CD4-positive, alpha-beta T cell (primary cell): ENCODE measurements at regions of chr2 and their contacts with region 1.

Region 1: DNA sequence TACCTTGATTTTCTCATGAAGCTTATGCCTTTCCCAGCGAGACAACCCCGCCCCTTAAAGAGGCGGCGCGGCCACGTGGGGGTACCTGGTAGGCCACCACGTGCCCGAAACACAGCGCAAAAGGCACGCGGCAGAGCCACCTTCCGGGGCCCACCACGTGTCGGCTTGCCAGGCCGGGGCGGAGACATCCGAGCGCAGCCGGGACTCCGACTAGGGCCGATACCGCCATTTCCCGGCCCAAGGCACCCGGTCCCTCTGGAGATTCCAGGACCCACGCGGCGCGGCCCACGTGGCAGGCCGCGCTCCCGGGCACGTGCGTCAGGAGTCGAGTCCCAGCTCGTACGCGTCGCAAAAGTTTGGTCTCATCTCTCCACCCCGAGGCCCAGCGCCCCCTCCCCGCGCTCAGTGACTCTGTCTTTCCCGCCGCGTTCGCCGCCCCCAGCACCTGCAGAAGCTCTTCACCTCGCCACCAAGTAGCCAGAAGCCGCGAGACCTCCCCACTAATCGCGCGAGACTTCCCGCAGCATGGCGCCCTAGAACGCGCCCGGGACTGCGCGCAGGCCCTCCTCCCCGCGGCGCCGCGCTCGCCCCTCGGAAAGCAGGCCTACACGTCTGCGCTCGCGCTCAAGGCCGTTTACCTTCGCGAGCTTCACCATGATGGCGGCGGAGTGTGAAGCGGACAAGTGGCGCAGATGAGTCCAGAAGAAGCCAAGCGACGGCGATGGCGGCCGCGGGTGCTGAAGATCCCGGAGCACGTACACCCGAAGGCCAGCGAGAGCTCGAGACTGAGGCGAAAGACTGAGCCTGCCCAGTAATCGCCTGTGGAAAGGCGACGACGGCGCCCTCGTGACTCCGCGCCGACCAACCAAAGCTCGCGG is at the start of gene NCL:
- DNase-seq: peak; percentile 75 to 98 (median 81)
- ATAC-seq: peak; percentile 67
- H3K4me3 ChIP-seq: peak within 1 kb of the TSS; percentile 91
- H3K4me3 Mint-ChIP-seq: peak within 1 kb of the TSS; percentile 93
- H3K27ac ChIP-seq: peak within 1 kb of the TSS; percentile 96 to 97
- H3K27ac Mint-ChIP-seq: peak within 1 kb of the TSS; percentile 99
- H3K4me1 ChIP-seq: peaks cover 57% of the 10 kb centered on the region
- H3K4me1 Mint-ChIP-seq: peaks cover 57% of the 10 kb centered on the region
- H3K27me3 ChIP-seq: no peaks in the 10 kb centered on the region
- H3K27me3 Mint-ChIP-seq: no peaks in the 10 kb centered on the region
- CTCF ChIP-seq: no peak
- total RNA-seq, gene NCL: 387 to 395 TPM

Region 2: GRCh38 chr2:231056453-231057424 is 407.2 kb before region 1 on chr2 and contains the start of gene PSMD1:
- CTCF ChIA-PET with region 1: no interaction called
- POLR2A ChIA-PET with region 1: interaction called, 13 read pairs
- intact Hi-C with region 1: loop called in 1 of 2 experiments (anchors 1 kb)
- DNase-seq: peak; percentile 88 to 97 (median 93)
- ATAC-seq: peak; percentile 81
- H3K4me3 ChIP-seq: peak within 1 kb of the TSS; percentile 95
- H3K4me3 Mint-ChIP-seq: peak within 1 kb of the TSS; percentile 100
- H3K27ac ChIP-seq: peak within 1 kb of the TSS; percentile 80 to 83
- H3K27ac Mint-ChIP-seq: peak within 1 kb of the TSS; percentile 98
- H3K4me1 ChIP-seq: peaks cover 34% of the 10 kb centered on the region
- H3K4me1 Mint-ChIP-seq: peaks cover 60% of the 10 kb centered on the region
- H3K27me3 ChIP-seq: no peaks in the 10 kb centered on the region
- H3K27me3 Mint-ChIP-seq: peaks cover 12% of the 10 kb centered on the region
- CTCF ChIP-seq: peak; percentile 94
- total RNA-seq, gene PSMD1: 27.9 to 31.3 TPM

Region 3: GRCh38 chr2:231452799-231453508 is 11.0 kb before region 1 on chr2:
- CTCF ChIA-PET with region 1: interaction called, 13 read pairs
- POLR2A ChIA-PET with region 1: interaction called, 117 read pairs
- intact Hi-C with region 1: no loop called
- DNase-seq: peak in 1 of 14 experiments; percentile 24
- ATAC-seq: no peak
- H3K4me3 ChIP-seq: no peak overlapping the region
- H3K4me3 Mint-ChIP-seq: peak overlapping the region; percentile 20
- H3K27ac ChIP-seq: no peak overlapping the region
- H3K27ac Mint-ChIP-seq: peak overlapping the region; percentile 82
- H3K4me1 ChIP-seq: peaks cover 8% of the 10 kb centered on the region
- H3K4me1 Mint-ChIP-seq: peaks cover 22% of the 10 kb centered on the region
- H3K27me3 ChIP-seq: no peaks in the 10 kb centered on the region
- H3K27me3 Mint-ChIP-seq: no peaks in the 10 kb centered on the region
- CTCF ChIP-seq: no peak

Region 4: GRCh38 chr2:231514103-231514950 is 50.4 kb after region 1 on chr2:
- CTCF ChIA-PET with region 1: no interaction called
- POLR2A ChIA-PET with region 1: interaction called, 67 read pairs
- intact Hi-C with region 1: loop called (anchors 1 kb)
- DNase-seq: peak; percentile 96 to 99 (median 98)
- ATAC-seq: peak; percentile 96
- H3K4me3 ChIP-seq: peak overlapping the region; percentile 78
- H3K4me3 Mint-ChIP-seq: peak overlapping the region; percentile 91
- H3K27ac ChIP-seq: peak overlapping the region; percentile 87 to 95
- H3K27ac Mint-ChIP-seq: peak overlapping the region; percentile 94
- H3K4me1 ChIP-seq: peaks cover 12% of the 10 kb centered on the region
- H3K4me1 Mint-ChIP-seq: peaks cover 24% of the 10 kb centered on the region
- H3K27me3 ChIP-seq: no peaks in the 10 kb centered on the region
- H3K27me3 Mint-ChIP-seq: no peaks in the 10 kb centered on the region
- CTCF ChIP-seq: no peak

Region 5: GRCh38 chr2:231662028-231662810 is 198.3 kb after region 1 on chr2:
- CTCF ChIA-PET with region 1: no interaction called
- POLR2A ChIA-PET with region 1: interaction called, 20 read pairs
- intact Hi-C with region 1: loop called in 1 of 2 experiments (anchors 1 kb)
- DNase-seq: peak; percentile 92 to 99 (median 97)
- ATAC-seq: peak; percentile 89
- H3K4me3 ChIP-seq: peak overlapping the region; percentile 57
- H3K4me3 Mint-ChIP-seq: peak overlapping the region; percentile 73
- H3K27ac ChIP-seq: peak overlapping the region; percentile 80 to 96
- H3K27ac Mint-ChIP-seq: peak overlapping the region; percentile 94
- H3K4me1 ChIP-seq: peaks cover 35% of the 10 kb centered on the region
- H3K4me1 Mint-ChIP-seq: peaks cover 17% of the 10 kb centered on the region
- H3K27me3 ChIP-seq: no peaks in the 10 kb centered on the region
- H3K27me3 Mint-ChIP-seq: no peaks in the 10 kb centered on the region
- CTCF ChIP-seq: no peak

Region 6: DNA sequence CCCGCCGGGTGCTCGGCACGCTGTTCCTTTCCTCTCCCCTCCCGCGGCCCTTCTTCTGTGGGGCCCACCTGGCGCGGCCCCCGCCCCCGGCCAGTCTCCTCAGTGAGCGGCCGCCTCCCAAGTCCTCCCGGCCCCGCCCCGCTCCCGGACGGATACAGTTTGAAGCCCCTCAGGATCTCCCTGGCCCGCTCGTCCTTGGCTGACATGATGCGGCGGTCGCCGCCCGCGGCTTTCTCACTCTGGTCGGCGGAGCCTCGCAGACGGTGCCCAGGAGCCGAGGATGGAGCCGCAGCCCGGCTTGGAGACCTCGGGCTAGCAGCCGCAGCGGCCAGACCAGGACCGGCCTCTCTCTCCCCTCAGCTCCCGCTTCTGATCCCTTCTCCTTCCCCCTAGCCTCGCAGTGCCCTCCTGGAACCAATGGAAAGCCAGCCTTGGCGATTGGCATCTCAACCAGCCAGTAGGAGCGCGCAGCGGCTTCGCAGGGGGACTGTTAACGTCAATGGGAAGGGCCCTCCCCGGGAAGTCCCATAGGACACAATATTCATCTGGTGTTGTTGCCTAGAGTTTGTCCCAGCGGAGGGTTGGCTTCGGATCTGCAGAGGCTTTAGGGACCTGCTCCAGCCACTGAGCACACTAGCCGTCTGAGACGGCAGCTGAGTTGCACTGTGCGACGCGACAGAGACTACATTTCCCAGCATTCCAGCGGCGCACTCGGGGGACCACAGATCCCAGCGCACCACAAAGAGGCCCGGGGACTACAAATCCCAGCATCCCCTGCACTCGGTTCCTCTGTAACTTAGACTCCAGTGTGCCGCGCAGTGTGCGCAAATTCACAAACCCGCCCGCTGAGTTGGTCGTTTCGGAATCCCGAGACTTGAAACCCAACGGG is 317.2 kb after region 1 on chr2 and contains the start of gene PDE6D:
- CTCF ChIA-PET with region 1: interaction called, 3 read pairs
- POLR2A ChIA-PET with region 1: interaction called, 10 read pairs
- intact Hi-C with region 1: loop called in 1 of 2 experiments (anchors 5 kb)
- DNase-seq: peak; percentile 91 to 97 (median 95)
- ATAC-seq: peak; percentile 89
- H3K4me3 ChIP-seq: peak within 1 kb of the TSS; percentile 90
- H3K4me3 Mint-ChIP-seq: peak within 1 kb of the TSS; percentile 94
- H3K27ac ChIP-seq: peak within 1 kb of the TSS; percentile 71 to 78
- H3K27ac Mint-ChIP-seq: peak within 1 kb of the TSS; percentile 94
- H3K4me1 ChIP-seq: peaks cover 36% of the 10 kb centered on the region
- H3K4me1 Mint-ChIP-seq: peaks cover 71% of the 10 kb centered on the region
- H3K27me3 ChIP-seq: no peaks in the 10 kb centered on the region
- H3K27me3 Mint-ChIP-seq: no peaks in the 10 kb centered on the region
- CTCF ChIP-seq: no peak
- total RNA-seq, gene PDE6D: 5.9 to 7.0 TPM